ENCODE measurements at regions of chr5 and their contacts with region 1.

Region 1: DNA sequence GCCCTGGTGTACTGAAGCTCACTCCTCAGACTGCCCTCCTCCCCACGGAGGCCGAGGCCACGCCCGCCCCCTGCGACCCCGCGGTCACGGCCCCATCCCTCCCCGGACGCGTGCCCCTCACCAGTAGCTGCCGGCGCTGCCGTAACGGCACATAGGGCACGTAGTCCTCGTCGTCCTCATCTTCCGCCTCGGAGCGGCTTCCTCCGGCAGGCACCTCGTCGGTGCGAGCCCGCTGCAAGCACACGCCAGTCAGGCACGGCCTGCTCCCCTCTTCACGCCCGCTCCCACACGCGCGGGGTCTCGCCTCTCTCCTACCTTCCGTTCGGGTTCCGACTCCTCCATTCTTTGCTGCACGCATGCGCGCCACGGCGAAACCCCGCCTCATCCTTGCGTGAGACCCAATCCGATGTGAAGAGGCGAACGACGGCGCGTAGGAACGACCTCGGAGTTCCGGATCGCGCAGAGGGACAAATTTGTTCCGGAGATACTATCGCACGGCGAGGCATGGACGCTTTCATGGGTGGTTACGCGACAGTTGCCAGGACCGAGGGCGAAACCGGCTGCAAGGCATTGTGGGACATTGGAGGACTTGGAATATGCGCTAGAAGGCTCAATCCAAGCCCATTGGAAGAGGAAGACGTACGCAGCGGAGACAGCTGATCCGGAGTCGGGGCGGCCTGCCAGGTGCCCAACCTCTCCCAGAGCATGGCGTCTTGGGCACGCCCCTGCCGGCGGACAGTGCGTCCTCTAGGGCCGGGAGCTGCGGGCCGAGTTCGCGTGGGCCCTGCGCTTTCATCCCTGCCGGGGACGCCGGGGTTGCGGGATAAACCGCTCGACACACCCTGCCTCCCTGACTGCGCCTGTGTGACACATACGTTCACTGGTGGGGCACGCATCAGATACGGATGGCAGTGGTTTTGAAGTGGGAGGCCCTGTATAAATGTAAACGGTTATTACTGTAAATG is at the start of gene DDX41:
- DNase-seq: peak; percentile 99
- H3K4me3 ChIP-seq: peak within 1 kb of the TSS; percentile 57 to 100 (median 86)
- H3K27ac ChIP-seq: peak within 1 kb of the TSS; percentile 54
- H3K4me1 ChIP-seq: peaks cover 14% of the 10 kb centered on the region
- H3K27me3 ChIP-seq: no peaks in the 10 kb centered on the region
- CTCF ChIP-seq: peak in 1 of 2 donors; percentile 20
- total RNA-seq, gene DDX41: 60.7 to 80.6 TPM

Region 2: GRCh38 chr5:177537389-177538361 is 20.8 kb after region 1 on chr5:
- CTCF ChIA-PET with region 1: no interaction called
- dilution Hi-C with region 1: no loop called
- in situ Hi-C with region 1: no loop called
- intact Hi-C with region 1: loop called (anchors 2 kb)
- DNase-seq: peak; percentile 67
- H3K4me3 ChIP-seq: no peak overlapping the region
- H3K27ac ChIP-seq: peak overlapping the region; percentile 62
- H3K4me1 ChIP-seq: peaks cover 43% of the 10 kb centered on the region
- H3K27me3 ChIP-seq: no peaks in the 10 kb centered on the region
- CTCF ChIP-seq: no peak

Region 3: GRCh38 chr5:177546258-177546741 is 29.4 kb after region 1 on chr5:
- CTCF ChIA-PET with region 1: interaction called, 3 read pairs
- dilution Hi-C with region 1: no loop called
- in situ Hi-C with region 1: no loop called
- intact Hi-C with region 1: loop called (anchors 1 kb)
- DNase-seq: peak; percentile 99
- H3K4me3 ChIP-seq: no peak overlapping the region
- H3K27ac ChIP-seq: peak overlapping the region; percentile 85
- H3K4me1 ChIP-seq: peaks cover 28% of the 10 kb centered on the region
- H3K27me3 ChIP-seq: no peaks in the 10 kb centered on the region
- CTCF ChIP-seq: peak in 1 of 2 donors; percentile 8

Region 4: GRCh38 chr5:177554474-177555111 is 37.7 kb after region 1 on chr5 and contains the start of gene FAM193B:
- CTCF ChIA-PET with region 1: no interaction called
- dilution Hi-C with region 1: no loop called
- in situ Hi-C with region 1: no loop called
- intact Hi-C with region 1: loop called (anchors 1 kb)
- DNase-seq: peak; percentile 86
- H3K4me3 ChIP-seq: peak within 1 kb of the TSS; percentile 80 to 96 (median 84)
- H3K27ac ChIP-seq: peak within 1 kb of the TSS; percentile 25
- H3K4me1 ChIP-seq: peaks cover 15% of the 10 kb centered on the region
- H3K27me3 ChIP-seq: no peaks in the 10 kb centered on the region
- CTCF ChIP-seq: peak; percentile 16 to 41
- total RNA-seq, gene FAM193B: 30.7 to 63.3 TPM

Region 5: GRCh38 chr5:177599731-177600507 is 83.0 kb after region 1 on chr5 and contains the start of gene B4GALT7:
- CTCF ChIA-PET with region 1: no interaction called
- dilution Hi-C with region 1: no loop called
- in situ Hi-C with region 1: no loop called
- intact Hi-C with region 1: loop called (anchors 1 kb)
- DNase-seq: peak; percentile 73
- H3K4me3 ChIP-seq: peak within 1 kb of the TSS; percentile 68 to 86 (median 80)
- H3K27ac ChIP-seq: peak within 1 kb of the TSS; percentile 69
- H3K4me1 ChIP-seq: peaks cover 9% of the 10 kb centered on the region
- H3K27me3 ChIP-seq: no peaks in the 10 kb centered on the region
- CTCF ChIP-seq: peak in 1 of 2 donors; percentile 4
- total RNA-seq, gene B4GALT7: 33.1 to 38.8 TPM